ENCODE measurements at regions of chr4 and their contacts with region 1.

Region 1: DNA sequence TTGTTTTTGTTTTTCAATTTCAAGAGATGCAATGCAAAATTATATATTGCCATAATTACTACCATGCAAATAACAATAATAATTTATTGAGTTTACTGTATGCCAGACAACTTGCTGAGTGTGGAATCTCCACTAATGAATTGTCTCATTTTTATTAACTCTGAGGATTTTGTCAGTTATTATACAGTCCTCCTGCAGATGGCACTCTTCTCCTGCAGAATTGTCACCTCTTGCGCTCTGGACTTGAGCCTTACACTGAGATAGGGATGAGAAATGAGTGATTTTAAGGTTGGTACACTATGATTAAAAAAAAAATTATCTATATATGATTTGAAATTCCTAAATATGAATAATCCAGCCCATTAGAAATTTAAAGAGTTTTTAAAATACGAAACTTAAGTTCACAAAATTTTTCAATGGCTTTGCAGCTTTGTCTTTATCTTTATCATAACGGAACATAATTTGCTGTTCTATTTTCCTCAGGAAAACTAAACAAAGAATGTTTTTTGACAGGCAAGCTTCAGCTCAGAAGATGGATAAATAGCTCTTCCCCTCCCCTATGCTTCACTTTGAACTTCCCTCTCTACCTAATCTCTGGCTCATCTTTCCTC is 12.7 kb upstream of the PAQR3 start:
- DNase-seq: peak; percentile 62
- H3K4me3 Mint-ChIP-seq: no peak overlapping the region
- H3K27ac Mint-ChIP-seq: no peak overlapping the region
- H3K4me1 Mint-ChIP-seq: no peaks in the 10 kb centered on the region
- H3K27me3 Mint-ChIP-seq: no peaks in the 10 kb centered on the region
- CTCF ChIP-seq: peak; percentile 73

Region 2: DNA sequence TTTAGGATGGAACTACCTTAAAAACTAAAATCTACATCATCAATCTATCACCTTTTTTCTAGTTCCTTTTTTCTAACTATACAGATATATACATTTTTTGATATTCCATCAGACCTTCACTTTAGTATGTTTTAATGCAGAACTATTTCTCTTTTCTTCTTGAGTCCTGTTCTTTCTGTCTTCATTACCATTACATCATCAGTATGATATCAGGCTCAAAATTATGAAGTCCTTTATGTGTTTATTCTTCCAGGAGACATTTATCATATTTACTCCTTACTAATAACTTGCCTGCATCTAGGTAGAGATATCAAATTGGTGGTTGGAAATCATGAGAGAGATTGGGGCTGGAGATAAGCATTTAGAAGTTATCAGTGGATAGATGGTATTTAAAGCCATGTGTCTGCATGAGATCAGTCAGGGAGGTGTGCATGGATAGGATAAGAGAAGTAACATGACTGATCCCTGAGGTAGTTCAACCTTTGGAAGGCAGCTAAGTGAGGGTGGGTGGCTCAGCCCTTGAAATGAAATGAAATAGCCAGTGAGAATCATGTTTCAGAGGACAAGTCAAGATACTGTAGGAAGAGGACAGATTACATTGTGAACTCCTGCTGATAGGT is 1046.2 kb before region 1 on chr4:
- CTCF ChIA-PET with region 1: no interaction called
- POLR2A ChIA-PET with region 1: no interaction called
- intact Hi-C with region 1: no loop called
- DNase-seq: no peak
- H3K4me3 Mint-ChIP-seq: no peak overlapping the region
- H3K27ac Mint-ChIP-seq: no peak overlapping the region
- H3K4me1 Mint-ChIP-seq: peaks cover 2% of the 10 kb centered on the region
- H3K27me3 Mint-ChIP-seq: no peaks in the 10 kb centered on the region
- CTCF ChIP-seq: no peak

Region 3: DNA sequence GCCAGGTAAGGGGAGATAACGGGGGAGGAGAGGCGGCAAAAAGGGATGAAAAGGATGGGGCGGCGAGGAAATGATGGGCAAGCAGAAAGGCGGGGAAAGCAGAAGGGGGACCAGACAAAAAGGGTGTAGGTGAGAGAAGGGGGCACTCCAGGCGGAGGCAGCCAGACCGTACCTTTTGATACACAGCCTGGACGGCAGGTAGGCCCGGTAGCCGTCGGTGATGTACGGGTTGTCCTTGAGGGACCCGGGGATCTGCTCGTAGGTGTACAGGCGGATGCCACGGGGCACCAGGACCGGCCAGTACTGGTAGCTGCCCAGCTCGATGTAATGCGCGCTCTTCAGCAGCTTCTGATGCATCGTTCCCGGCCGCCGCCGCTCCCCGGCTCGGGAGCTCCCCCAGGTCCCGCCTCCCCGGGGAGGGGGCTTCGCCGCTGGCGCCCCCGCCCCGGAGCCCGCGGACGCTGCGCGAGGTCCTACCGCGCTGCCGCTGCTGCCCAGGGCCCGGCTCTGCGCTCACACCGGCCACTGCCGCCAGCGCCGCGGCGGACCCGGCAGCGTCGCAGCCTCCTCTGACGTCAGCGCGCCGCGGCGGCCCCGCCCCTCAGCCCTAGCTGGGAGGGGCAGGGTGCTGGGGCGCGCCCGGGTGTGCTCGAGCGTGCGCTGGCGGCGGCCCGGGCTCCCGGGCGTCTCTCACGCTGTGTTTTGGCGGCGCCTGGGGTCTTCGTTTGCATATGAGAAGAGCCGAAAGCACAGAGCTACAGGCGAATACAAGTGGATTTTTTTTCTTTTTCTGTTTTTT is 12.9 kb before region 1 on chr4 and contains the start of gene PAQR3:
- CTCF ChIA-PET with region 1: interaction called, 16 read pairs
- POLR2A ChIA-PET with region 1: interaction called, 6 read pairs
- intact Hi-C with region 1: no loop called
- DNase-seq: peak; percentile 80
- H3K4me3 Mint-ChIP-seq: peak within 1 kb of the TSS; percentile 93
- H3K27ac Mint-ChIP-seq: peak within 1 kb of the TSS; percentile 93
- H3K4me1 Mint-ChIP-seq: peaks cover 5% of the 10 kb centered on the region
- H3K27me3 Mint-ChIP-seq: no peaks in the 10 kb centered on the region
- CTCF ChIP-seq: no peak
- total RNA-seq, gene PAQR3: 11.2 and 19.1 TPM in 2 replicates

Region 4: DNA sequence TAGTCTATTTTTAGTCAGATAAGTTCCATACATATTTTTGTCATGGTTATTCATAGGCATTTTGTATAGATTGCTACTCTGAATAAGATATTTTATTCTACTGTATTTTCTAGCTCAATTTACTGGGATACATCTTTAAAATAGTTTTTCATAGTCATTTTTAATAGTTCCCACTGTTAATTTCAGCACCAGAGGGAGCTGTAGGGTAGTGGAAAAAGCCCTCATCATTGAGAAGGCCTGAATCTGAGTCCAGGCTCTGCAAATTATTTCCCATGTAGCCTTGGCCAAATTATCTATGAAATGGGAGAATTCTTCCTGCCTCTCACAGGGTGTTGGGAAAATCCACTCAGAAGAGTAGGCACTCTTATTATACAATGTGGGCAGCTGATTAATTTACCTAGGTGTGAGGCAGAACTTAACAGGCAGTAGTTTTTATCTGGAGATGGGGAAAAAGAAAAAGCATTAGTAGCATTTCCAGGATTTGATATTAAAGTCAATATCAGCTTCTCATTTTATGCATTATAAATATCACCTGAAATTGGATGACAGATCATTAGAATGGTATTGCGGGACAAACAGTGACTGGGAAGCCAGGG is 90.2 kb after region 1 on chr4:
- CTCF ChIA-PET with region 1: interaction called, 27 read pairs
- POLR2A ChIA-PET with region 1: no interaction called
- intact Hi-C with region 1: loop called (anchors 5 kb)
- DNase-seq: peak; percentile 59
- H3K4me3 Mint-ChIP-seq: no peak overlapping the region
- H3K27ac Mint-ChIP-seq: no peak overlapping the region
- H3K4me1 Mint-ChIP-seq: no peaks in the 10 kb centered on the region
- H3K27me3 Mint-ChIP-seq: no peaks in the 10 kb centered on the region
- CTCF ChIP-seq: peak; percentile 56

Region 5: GRCh38 chr4:79576429-79576753 is 624.4 kb after region 1 on chr4:
- CTCF ChIA-PET with region 1: interaction called, 58 read pairs
- POLR2A ChIA-PET with region 1: no interaction called
- intact Hi-C with region 1: loop called (anchors 1 kb)
- DNase-seq: peak; percentile 51
- H3K4me3 Mint-ChIP-seq: no peak overlapping the region
- H3K27ac Mint-ChIP-seq: no peak overlapping the region
- H3K4me1 Mint-ChIP-seq: peaks cover 5% of the 10 kb centered on the region
- H3K27me3 Mint-ChIP-seq: peaks cover 12% of the 10 kb centered on the region
- CTCF ChIP-seq: peak; percentile 58

Region 6: GRCh38 chr4:80215449-80216052 is 1263.6 kb after region 1 on chr4:
- CTCF ChIA-PET with region 1: interaction called, 42 read pairs
- POLR2A ChIA-PET with region 1: interaction called, 3 read pairs
- intact Hi-C with region 1: loop called (anchors 1 kb)
- DNase-seq: peak; percentile 39
- H3K4me3 Mint-ChIP-seq: no peak overlapping the region
- H3K27ac Mint-ChIP-seq: no peak overlapping the region
- H3K4me1 Mint-ChIP-seq: peaks cover 15% of the 10 kb centered on the region
- H3K27me3 Mint-ChIP-seq: no peaks in the 10 kb centered on the region
- CTCF ChIP-seq: peak; percentile 44

Region 7: GRCh38 chr4:80221161-80221560 is 1269.2 kb after region 1 on chr4:
- CTCF ChIA-PET with region 1: interaction called, 27 read pairs
- POLR2A ChIA-PET with region 1: no interaction called
- intact Hi-C with region 1: no loop called
- DNase-seq: peak; percentile 34
- H3K4me3 Mint-ChIP-seq: no peak overlapping the region
- H3K27ac Mint-ChIP-seq: no peak overlapping the region
- H3K4me1 Mint-ChIP-seq: no peaks in the 10 kb centered on the region
- H3K27me3 Mint-ChIP-seq: no peaks in the 10 kb centered on the region
- CTCF ChIP-seq: peak; percentile 23

Region 8: GRCh38 chr4:80335554-80336358 is 1383.8 kb after region 1 on chr4 and contains the start of gene CFAP299:
- CTCF ChIA-PET with region 1: interaction called, 5 read pairs
- POLR2A ChIA-PET with region 1: no interaction called
- intact Hi-C with region 1: loop called (anchors 1 kb)
- DNase-seq: peak; percentile 94
- H3K4me3 Mint-ChIP-seq: peak within 1 kb of the TSS; percentile 80
- H3K27ac Mint-ChIP-seq: no peak within 1 kb of the TSS
- H3K4me1 Mint-ChIP-seq: no peaks in the 10 kb centered on the region
- H3K27me3 Mint-ChIP-seq: no peaks in the 10 kb centered on the region
- CTCF ChIP-seq: peak; percentile 45
- total RNA-seq, gene CFAP299: 0.33 TPM in 1 of 2 replicates, not detected in the other